ENCODE measurements at regions of chr7 and their contacts with region 1.

Region 1: DNA sequence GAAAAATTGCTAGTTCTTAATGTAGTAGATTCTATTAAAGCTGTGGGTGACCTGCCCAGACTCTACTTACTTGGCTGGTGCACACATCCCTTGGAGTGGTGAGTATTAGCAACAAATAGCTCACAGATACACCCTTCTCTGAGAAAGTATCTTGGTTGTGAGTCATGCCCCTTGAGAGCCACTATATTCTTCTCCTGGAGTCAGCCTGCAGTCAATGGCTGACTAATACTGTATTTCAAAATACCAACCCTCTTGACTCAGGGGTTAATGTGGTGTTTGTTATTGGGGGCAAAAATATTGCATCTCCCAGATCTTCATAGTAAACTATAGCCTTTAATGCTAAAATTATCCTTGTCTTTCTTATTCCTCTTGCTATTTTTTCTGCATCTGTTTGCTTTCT is 354.9 kb downstream of the BMPER start:
- DNase-seq: peak; percentile 94
- ATAC-seq: peak; percentile 99
- H3K4me3 ChIP-seq: no peak overlapping the region
- H3K27ac ChIP-seq: no peak overlapping the region
- H3K4me1 ChIP-seq: 0 out of 2 replicates have a peak, but pooled peaks cover 2% of the 10 kb centered on the region
- H3K27me3 ChIP-seq: no peaks in the 10 kb centered on the region
- CTCF ChIP-seq: no peak
- POLR2A ChIP-seq: no peak
- RAD21 ChIP-seq: no peak

Region 2: GRCh38 chr7:33979807-33980355 is 280.4 kb before region 1 on chr7:
- CTCF ChIA-PET with region 1: no interaction called
- POLR2A ChIA-PET with region 1: no interaction called
- dilution Hi-C with region 1: no loop called
- in situ Hi-C with region 1: no loop called
- intact Hi-C with region 1: loop called (anchors 2 kb)
- DNase-seq: peak; percentile 99
- ATAC-seq: peak; percentile 83
- H3K4me3 ChIP-seq: no peak overlapping the region
- H3K27ac ChIP-seq: peak overlapping the region; percentile 92
- H3K4me1 ChIP-seq: peaks cover 23% of the 10 kb centered on the region
- H3K27me3 ChIP-seq: no peaks in the 10 kb centered on the region
- CTCF ChIP-seq: no peak
- POLR2A ChIP-seq: 0 out of 2 replicates have a peak, but pooled peaks have one; percentile 10
- RAD21 ChIP-seq: peak; percentile 15; the same call in 1 of the 2 replicates

Region 3: DNA sequence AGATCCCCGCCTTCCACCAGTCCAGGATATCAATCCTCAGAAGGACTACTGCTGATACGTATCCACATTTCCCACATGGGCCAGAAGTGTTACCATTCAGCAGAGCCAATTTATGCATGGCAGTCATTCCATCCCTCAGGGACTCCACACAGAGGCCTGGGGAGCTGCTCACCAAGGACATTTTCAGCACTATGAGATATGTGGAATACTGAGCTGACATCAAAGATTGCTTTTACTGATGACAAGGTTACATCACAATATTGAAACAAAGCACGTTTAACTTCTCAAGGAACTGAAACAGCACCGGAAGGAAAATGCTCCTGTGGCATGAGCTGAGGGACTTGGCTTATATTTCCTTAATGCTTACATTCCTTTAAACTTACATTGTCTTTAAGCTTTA is 19.9 kb before region 1 on chr7:
- CTCF ChIA-PET with region 1: no interaction called
- POLR2A ChIA-PET with region 1: no interaction called
- dilution Hi-C with region 1: no loop called
- in situ Hi-C with region 1: no loop called
- intact Hi-C with region 1: no loop called
- DNase-seq: no peak
- ATAC-seq: no peak
- H3K4me3 ChIP-seq: no peak overlapping the region
- H3K27ac ChIP-seq: no peak overlapping the region
- H3K4me1 ChIP-seq: no peaks in the 10 kb centered on the region
- H3K27me3 ChIP-seq: peaks cover 7% of the 10 kb centered on the region
- CTCF ChIP-seq: no peak
- POLR2A ChIP-seq: no peak
- RAD21 ChIP-seq: no peak